Naive thymus-derived CD4-positive, alpha-beta T cell (primary cell): ENCODE measurements at regions of chr12 and their contacts with region 1.

Region 1: DNA sequence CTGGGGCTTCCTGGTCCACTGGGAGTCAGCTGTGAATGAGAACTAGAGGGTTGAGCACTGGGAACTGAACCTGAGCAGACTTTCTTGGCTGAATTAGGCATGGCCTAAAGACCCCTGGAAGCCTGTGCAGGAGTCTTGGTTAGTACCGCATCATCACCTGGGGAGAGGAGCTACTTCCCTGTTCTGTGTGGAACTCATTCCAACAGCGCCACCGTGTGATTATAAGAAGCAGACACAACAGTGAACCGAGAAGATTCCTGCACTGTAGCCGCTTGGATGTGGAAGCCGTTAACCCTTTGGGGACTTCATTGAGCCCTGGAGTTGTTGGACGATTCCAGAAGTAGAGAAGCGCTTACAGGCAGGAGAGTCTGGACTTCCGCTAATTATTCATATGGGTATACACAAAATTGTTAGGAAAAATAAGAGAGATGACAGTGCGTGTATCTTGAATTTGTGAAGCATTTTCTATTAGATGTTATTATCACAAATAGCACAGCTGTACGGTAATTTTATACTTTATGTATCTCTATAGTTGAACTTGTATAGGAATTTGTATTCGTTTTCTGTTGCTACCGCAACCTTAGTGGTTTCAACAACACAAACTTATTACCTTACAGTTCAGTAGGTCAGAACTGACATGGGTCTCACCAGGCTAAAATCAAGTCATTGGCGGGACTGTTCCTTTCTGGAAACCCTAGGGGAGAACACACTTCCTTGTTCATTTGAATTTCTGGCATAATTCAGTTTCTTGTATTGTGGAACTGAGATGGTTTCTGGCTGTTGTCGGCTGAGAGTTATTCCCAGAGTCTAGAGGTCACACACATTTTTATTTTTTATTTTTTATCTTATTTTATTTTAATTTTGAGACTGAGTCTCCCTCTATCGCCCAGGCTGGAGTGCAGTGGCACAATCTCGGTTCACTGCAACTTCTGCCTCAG is 100.7 kb downstream of the C2CD5 start:
- DNase-seq: peak; percentile 22 to 66 (median 58)
- ATAC-seq: peak; percentile 100
- H3K4me3 ChIP-seq: no peak overlapping the region
- H3K4me3 Mint-ChIP-seq: no peak overlapping the region
- H3K27ac ChIP-seq: no peak overlapping the region
- H3K27ac Mint-ChIP-seq: no peak overlapping the region
- H3K4me1 ChIP-seq: peaks cover 0 to 4% of the 10 kb centered on the region in 2 donors
- H3K4me1 Mint-ChIP-seq: peaks cover 0 to 10% (median 3%) of the 10 kb centered on the region in 7 donors
- H3K27me3 ChIP-seq: no peaks in the 10 kb centered on the region
- H3K27me3 Mint-ChIP-seq: peaks cover 0 to 6% (median 0%) of the 10 kb centered on the region in 5 donors

Region 2: GRCh38 chr12:21607701-21608100 is 835.9 kb before region 1 on chr12:
- CTCF ChIA-PET with region 1: no interaction called
- POLR2A ChIA-PET with region 1: no interaction called
- intact Hi-C with region 1: loop called in 1 of 2 experiments (anchors 5 kb)
- DNase-seq: peak in 6 of 9 donors; percentile 14 to 57 (median 43)
- ATAC-seq: no peak
- H3K4me3 ChIP-seq: no peak overlapping the region
- H3K4me3 Mint-ChIP-seq: no peak overlapping the region
- H3K27ac ChIP-seq: no peak overlapping the region
- H3K27ac Mint-ChIP-seq: no peak overlapping the region
- H3K4me1 ChIP-seq: peaks cover 0 to 10% of the 10 kb centered on the region in 2 donors
- H3K4me1 Mint-ChIP-seq: peaks cover 2 to 8% (median 7%) of the 10 kb centered on the region in 7 donors
- H3K27me3 ChIP-seq: no peaks in the 10 kb centered on the region
- H3K27me3 Mint-ChIP-seq: peaks cover 0 to 7% (median 0%) of the 10 kb centered on the region in 5 donors

Region 3: GRCh38 chr12:22083167-22083566 is 360.5 kb before region 1 on chr12:
- CTCF ChIA-PET with region 1: interaction called, 10 read pairs
- POLR2A ChIA-PET with region 1: interaction called, 3 read pairs
- intact Hi-C with region 1: loop called (anchors 1 kb)
- DNase-seq: peak in 7 of 9 donors; percentile 18 to 57 (median 47)
- ATAC-seq: peak; percentile 56
- H3K4me3 ChIP-seq: no peak overlapping the region
- H3K4me3 Mint-ChIP-seq: no peak overlapping the region
- H3K27ac ChIP-seq: no peak overlapping the region
- H3K27ac Mint-ChIP-seq: no peak overlapping the region
- H3K4me1 ChIP-seq: no peaks in the 10 kb centered on the region
- H3K4me1 Mint-ChIP-seq: no peaks in the 10 kb centered on the region
- H3K27me3 ChIP-seq: no peaks in the 10 kb centered on the region
- H3K27me3 Mint-ChIP-seq: peaks cover 0 to 9% (median 0%) of the 10 kb centered on the region in 5 donors

Region 4: DNA sequence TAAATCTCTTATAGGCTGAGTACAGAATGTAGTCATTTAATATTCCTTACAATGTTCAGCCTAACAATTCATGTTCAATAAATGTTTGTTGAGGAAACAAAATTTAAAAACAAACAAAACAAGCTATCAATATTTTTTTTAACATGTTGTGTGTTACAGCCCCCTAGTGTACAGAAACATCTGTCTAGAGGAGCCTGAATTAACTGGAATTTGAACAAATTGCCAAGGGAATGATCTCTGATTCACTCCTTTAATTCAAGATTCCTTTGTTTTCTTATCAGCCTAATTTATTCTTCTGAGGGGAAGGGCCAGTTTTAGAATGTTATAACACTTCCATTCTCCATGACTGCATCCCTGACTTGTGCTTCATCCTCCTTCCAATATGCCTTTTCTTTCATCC is 270.5 kb before region 1 on chr12:
- CTCF ChIA-PET with region 1: no interaction called
- POLR2A ChIA-PET with region 1: no interaction called
- intact Hi-C with region 1: loop called in 1 of 2 experiments (anchors 2 kb)
- DNase-seq: peak in 2 of 9 donors; percentile 6 to 12
- ATAC-seq: no peak
- H3K4me3 ChIP-seq: no peak overlapping the region
- H3K4me3 Mint-ChIP-seq: no peak overlapping the region
- H3K27ac ChIP-seq: no peak overlapping the region
- H3K27ac Mint-ChIP-seq: no peak overlapping the region
- H3K4me1 ChIP-seq: no peaks in the 10 kb centered on the region
- H3K4me1 Mint-ChIP-seq: peaks cover 2 to 8% (median 6%) of the 10 kb centered on the region in 7 donors
- H3K27me3 ChIP-seq: no peaks in the 10 kb centered on the region
- H3K27me3 Mint-ChIP-seq: peaks cover 0 to 2% (median 0%) of the 10 kb centered on the region in 5 donors

Region 5: GRCh38 chr12:22396253-22396652 is 47.4 kb before region 1 on chr12:
- CTCF ChIA-PET with region 1: no interaction called
- POLR2A ChIA-PET with region 1: no interaction called
- intact Hi-C with region 1: loop called in 1 of 2 experiments (anchors 5 kb)
- DNase-seq: peak in 7 of 9 donors; percentile 14 to 56 (median 46)
- ATAC-seq: peak; percentile 92
- H3K4me3 ChIP-seq: no peak overlapping the region
- H3K4me3 Mint-ChIP-seq: peak overlapping the region; percentile 44 to 84 (median 73)
- H3K27ac ChIP-seq: peak overlapping the region; percentile 26
- H3K27ac Mint-ChIP-seq: peak overlapping the region; percentile 66 to 93 (median 85)
- H3K4me1 ChIP-seq: peaks cover 34 to 36% of the 10 kb centered on the region in 2 donors
- H3K4me1 Mint-ChIP-seq: peaks cover 20 to 48% (median 42%) of the 10 kb centered on the region in 7 donors
- H3K27me3 ChIP-seq: no peaks in the 10 kb centered on the region
- H3K27me3 Mint-ChIP-seq: no peaks in the 10 kb centered on the region

Region 6: DNA sequence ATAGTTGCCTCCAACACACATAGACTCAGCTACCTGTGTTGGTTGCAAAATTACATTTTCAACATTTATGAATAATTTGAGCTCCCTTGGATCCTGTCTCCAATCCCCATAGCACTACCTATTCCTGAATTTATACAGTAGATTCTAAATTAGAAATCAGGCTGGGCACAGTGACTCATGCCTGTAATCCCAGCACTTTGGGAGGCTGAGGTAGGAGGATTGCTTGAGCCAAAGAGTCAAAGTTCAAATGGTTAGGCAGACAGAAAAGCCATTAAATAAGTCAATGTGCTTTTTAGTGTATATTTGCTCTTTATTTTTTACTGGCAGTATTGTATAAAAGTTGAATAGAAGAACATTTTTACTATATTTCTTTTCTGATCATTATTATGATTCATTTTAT is 125.6 kb after region 1 on chr12:
- CTCF ChIA-PET with region 1: no interaction called
- POLR2A ChIA-PET with region 1: no interaction called
- intact Hi-C with region 1: no loop called
- DNase-seq: no peak
- ATAC-seq: no peak
- H3K4me3 ChIP-seq: no peak overlapping the region
- H3K4me3 Mint-ChIP-seq: no peak overlapping the region
- H3K27ac ChIP-seq: no peak overlapping the region
- H3K27ac Mint-ChIP-seq: no peak overlapping the region
- H3K4me1 ChIP-seq: no peaks in the 10 kb centered on the region
- H3K4me1 Mint-ChIP-seq: no peaks in the 10 kb centered on the region
- H3K27me3 ChIP-seq: no peaks in the 10 kb centered on the region
- H3K27me3 Mint-ChIP-seq: peaks cover 0 to 8% (median 0%) of the 10 kb centered on the region in 5 donors

Region 7: DNA sequence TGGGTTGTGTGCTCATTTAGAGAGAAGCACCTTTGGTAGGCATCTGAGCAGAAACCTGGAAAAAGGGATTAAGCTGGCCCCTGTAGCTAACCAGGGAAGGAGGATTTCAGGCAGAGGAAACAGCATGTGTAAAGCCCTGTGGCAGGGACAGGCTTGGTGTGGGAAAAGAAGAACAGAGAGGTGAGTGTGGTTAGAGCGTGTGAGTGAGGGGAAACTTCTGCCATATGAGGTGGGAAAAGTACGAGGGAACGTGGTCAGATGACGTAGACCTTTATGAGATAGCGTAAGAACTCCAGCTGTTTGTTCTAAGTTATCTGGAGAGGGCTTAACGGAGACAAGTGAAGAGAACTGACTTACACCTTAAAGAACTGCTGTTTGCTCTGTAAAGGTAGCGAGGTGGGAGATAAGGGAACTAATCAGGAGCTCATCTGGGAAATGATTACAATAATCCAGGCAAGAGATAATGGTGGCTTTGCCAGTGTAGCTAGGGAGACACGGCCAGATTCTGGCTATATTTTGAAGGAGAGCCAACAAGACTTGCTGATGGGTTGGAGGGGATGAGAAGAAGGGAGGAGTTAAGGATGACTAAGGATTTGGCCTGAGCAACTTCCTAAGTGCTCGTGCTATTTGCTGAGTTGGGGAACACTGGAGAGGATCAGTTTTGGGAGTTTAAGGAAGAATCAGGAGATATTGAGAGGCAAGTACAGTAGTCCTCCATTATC is 415.4 kb after region 1 on chr12:
- CTCF ChIA-PET with region 1: no interaction called
- POLR2A ChIA-PET with region 1: no interaction called
- intact Hi-C with region 1: no loop called
- DNase-seq: no peak
- ATAC-seq: no peak
- H3K4me3 ChIP-seq: no peak overlapping the region
- H3K4me3 Mint-ChIP-seq: no peak overlapping the region
- H3K27ac ChIP-seq: no peak overlapping the region
- H3K27ac Mint-ChIP-seq: no peak overlapping the region
- H3K4me1 ChIP-seq: no peaks in the 10 kb centered on the region
- H3K4me1 Mint-ChIP-seq: no peaks in the 10 kb centered on the region
- H3K27me3 ChIP-seq: no peaks in the 10 kb centered on the region
- H3K27me3 Mint-ChIP-seq: peaks cover 0 to 23% (median 18%) of the 10 kb centered on the region in 5 donors